Activated naive CD4-positive, alpha-beta T cell treated with anti-CD3 and anti-CD28 coated beads for 36 hours (primary cell): ENCODE measurements at regions of chr1 and their contacts with region 1.

Region 1: DNA sequence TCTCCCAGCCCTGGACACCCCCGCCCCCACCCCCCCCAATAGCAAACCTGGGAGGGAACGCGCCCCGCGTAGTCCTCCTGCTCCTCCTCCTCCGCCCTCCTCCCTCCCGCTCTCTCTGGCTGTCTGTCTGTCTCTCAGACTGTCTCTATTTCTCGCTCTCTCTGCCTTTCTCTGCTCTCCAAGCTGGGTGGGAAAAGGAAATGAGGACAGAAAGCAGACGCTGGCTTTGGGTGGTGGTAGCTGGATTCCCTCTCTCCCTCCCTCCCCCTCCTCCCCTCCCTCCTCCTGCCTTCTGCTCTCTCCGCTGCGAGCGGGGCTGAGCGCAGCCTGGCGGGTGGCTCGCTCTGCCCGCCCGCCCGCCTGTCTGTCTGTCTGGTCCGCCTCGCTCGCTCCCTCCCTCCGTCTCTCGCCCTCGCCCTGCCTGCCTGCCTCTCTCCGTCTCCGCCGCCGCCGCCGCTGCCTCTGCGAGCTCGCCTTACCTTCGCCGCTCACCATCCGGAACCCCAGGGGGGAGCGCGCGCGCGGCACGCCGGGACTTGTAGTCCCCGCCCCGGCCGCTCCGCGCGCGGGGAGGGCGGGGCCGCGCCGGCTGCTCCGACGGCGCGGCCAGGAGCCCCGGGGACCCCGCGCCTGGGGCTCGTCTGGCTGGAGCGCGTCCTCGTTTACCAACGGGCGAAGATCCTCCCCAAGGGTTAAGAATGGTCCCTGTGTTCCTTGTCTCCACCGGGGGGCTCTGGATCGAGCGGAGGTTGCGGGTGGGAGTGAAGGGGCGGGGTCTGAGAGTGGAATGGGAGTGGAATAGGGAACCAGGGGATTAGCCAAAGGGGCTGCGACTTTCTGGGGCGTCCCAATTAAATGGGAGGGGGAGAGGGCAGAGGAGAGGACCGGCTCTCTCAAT is at the start of gene AHDC1:
- DNase-seq: peak; percentile 91
- H3K4me3 Mint-ChIP-seq: peak within 1 kb of the TSS; percentile 85
- H3K27ac Mint-ChIP-seq: peak within 1 kb of the TSS; percentile 57
- H3K4me1 Mint-ChIP-seq: peaks cover 39% of the 10 kb centered on the region
- H3K27me3 Mint-ChIP-seq: no peaks in the 10 kb centered on the region
- total RNA-seq, gene AHDC1: 7.7 to 10.1 TPM

Region 2: DNA sequence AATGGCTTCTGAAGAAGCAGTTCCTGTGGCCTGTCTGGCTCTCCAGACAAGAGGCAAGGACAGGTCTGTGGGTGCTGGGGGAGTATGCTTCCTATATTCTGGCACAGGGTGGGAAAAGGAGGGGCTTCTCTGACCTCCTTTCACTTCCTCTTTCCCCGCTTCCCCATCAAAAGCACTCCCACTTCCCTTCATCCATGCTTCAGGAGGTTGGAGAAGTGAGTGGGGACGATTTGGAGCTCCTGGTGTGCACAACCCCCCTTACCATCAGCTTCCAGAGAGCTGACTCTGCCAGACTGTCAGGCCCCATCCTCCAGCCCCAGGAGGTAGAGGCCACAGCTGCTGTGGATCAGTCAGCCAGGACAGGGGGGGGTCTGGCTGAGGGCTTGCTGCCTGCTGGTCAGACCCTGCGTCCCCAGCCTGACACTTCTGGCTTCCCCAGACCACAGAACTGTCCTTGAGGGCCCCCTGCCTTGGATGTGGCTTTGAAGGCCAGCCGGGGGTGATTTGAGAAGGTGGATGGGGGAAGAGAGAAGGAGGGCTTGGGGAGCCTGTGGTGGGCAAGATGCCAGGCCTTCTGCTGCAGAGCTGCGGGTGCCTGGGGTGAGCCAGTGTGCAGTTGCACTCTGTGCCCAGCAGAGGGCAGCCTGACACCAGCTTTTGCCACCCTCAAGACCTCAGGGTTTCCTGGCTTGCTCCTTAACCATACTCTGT is 303.4 kb before region 1 on chr1:
- CTCF ChIA-PET with region 1: interaction called, 51 read pairs
- intact Hi-C with region 1: loop called (anchors 1 kb)
- DNase-seq: peak; percentile 84
- H3K4me3 Mint-ChIP-seq: no peak overlapping the region
- H3K27ac Mint-ChIP-seq: no peak overlapping the region
- H3K4me1 Mint-ChIP-seq: no peaks in the 10 kb centered on the region
- H3K27me3 Mint-ChIP-seq: no peaks in the 10 kb centered on the region

Region 3: DNA sequence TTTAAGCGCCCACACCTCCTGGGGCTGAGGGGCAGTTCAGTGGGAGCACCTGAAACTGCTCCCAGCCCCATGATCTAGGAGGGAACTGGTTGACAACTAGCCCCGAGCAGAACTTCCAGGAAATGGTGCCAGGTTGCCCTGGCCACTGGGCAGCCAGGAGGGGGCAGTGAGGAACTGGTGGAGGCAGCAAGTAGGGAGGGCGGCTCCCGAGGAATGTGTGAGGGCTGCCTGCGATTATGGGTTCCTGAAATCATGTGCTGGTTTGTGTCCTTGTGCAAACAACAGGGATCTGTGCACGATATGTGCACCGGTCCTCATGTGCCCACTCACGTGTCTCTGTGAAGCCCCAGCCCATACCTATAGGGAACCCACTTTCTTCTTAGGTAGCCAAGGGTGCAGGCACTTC is 201.6 kb before region 1 on chr1:
- CTCF ChIA-PET with region 1: interaction called, 30 read pairs
- intact Hi-C with region 1: loop called (anchors 1 kb)
- DNase-seq: peak; percentile 53
- H3K4me3 Mint-ChIP-seq: no peak overlapping the region
- H3K27ac Mint-ChIP-seq: peak overlapping the region; percentile 74
- H3K4me1 Mint-ChIP-seq: peaks cover 19% of the 10 kb centered on the region
- H3K27me3 Mint-ChIP-seq: no peaks in the 10 kb centered on the region

Region 4: GRCh38 chr1:27525296-27526272 is 78.3 kb before region 1 on chr1:
- CTCF ChIA-PET with region 1: interaction called, 42 read pairs
- intact Hi-C with region 1: loop called (anchors 1 kb)
- DNase-seq: peak; percentile 83
- H3K4me3 Mint-ChIP-seq: peak overlapping the region; percentile 69
- H3K27ac Mint-ChIP-seq: peak overlapping the region; percentile 72
- H3K4me1 Mint-ChIP-seq: peaks cover 56% of the 10 kb centered on the region
- H3K27me3 Mint-ChIP-seq: no peaks in the 10 kb centered on the region

Region 5: DNA sequence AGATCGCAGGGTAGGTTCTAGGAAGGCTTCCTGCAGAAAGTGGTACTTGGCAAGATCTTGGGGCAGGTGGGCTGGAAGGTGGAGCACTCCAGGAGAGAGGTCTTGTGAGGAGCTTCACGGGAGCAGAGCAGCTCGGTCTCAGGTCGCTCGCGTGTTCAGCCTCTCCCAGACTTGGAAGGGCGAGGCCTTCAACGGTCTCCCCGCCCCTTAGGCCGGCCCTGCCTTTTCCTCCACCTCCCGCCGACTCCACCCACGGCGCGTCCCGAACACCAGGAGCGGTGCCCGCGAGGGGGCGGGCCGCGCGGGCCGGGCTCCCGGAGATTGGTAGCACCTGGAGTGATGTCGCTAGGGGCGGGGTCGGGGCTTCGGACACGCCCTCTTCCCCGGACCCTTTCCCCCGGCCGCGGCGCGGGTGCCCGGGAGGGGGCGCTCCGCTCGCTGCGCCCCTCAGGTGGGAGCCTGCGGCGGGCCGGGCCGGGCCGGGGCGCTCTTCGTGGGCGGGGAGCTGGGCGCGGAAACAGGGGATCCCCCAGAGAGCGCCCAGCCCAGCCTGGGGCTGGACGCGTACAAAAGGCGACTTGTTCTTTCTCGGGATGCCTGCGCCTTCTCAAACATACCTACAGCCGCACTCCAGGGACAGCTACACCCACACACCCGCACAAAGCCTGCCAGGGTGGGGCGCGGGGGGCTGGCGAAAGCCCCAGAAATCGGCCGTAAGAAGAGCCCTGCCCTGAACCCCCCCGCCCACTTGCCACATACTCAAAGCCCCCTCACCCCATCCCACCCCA is 35.4 kb before region 1 on chr1:
- CTCF ChIA-PET with region 1: interaction called, 22 read pairs
- intact Hi-C with region 1: loop called (anchors 1 kb)
- DNase-seq: peak; percentile 96
- H3K4me3 Mint-ChIP-seq: peak overlapping the region; percentile 63
- H3K27ac Mint-ChIP-seq: no peak overlapping the region
- H3K4me1 Mint-ChIP-seq: peaks cover 13% of the 10 kb centered on the region
- H3K27me3 Mint-ChIP-seq: no peaks in the 10 kb centered on the region

Region 6: GRCh38 chr1:27671964-27672749 is 68.2 kb after region 1 on chr1 and contains the start of gene IFI6:
- CTCF ChIA-PET with region 1: interaction called, 263 read pairs
- intact Hi-C with region 1: no loop called
- DNase-seq: peak; percentile 89
- H3K4me3 Mint-ChIP-seq: peak within 1 kb of the TSS; percentile 95
- H3K27ac Mint-ChIP-seq: peak within 1 kb of the TSS; percentile 91
- H3K4me1 Mint-ChIP-seq: peaks cover 30% of the 10 kb centered on the region
- H3K27me3 Mint-ChIP-seq: no peaks in the 10 kb centered on the region
- total RNA-seq, gene IFI6: 115 to 125 TPM

Region 7: DNA sequence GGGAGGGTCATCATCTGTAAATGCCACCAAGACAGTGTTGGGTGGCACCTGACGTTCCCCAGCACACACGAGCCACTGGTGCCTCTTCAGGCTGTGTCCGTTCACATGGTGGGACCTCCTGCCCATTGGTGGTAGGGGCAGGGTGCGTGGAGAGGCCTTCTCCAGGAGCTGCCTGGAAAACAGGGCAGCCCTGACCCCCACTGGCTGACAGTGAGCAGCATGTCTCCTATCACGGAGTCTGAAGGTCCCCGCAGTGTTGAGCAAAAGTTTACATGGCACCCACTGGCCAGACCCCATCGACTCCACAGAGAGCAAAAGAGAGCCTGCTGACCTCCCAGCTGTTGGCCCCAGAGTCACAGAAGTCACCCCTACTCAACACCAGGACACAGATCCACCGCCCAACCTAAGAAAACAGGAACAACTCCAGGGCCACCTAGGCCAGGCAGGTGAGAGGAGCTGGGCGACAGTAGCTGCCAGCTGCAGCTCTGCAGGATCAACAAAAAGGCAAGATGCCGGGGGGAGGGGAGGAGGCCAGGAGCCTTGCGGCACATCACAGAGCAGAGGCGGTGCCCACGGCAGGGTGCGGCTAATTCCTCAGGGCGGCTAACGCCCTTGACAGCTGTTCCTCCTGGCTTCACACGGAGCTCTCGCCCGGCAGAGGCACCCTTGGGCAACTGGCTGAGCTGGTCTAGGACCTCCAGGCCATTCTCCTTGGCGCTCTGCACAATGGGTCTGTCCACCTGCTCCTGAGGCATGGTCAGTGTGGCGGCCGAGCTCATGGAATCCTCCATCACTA is 82.5 kb after region 1 on chr1:
- CTCF ChIA-PET with region 1: no interaction called
- intact Hi-C with region 1: no loop called
- DNase-seq: no peak
- H3K4me3 Mint-ChIP-seq: no peak overlapping the region
- H3K27ac Mint-ChIP-seq: no peak overlapping the region
- H3K4me1 Mint-ChIP-seq: peaks cover 9% of the 10 kb centered on the region
- H3K27me3 Mint-ChIP-seq: peaks cover 2% of the 10 kb centered on the region

Region 8: GRCh38 chr1:27704958-27705357 is 101.0 kb after region 1 on chr1:
- CTCF ChIA-PET with region 1: no interaction called
- intact Hi-C with region 1: no loop called
- DNase-seq: no peak
- H3K4me3 Mint-ChIP-seq: no peak overlapping the region
- H3K27ac Mint-ChIP-seq: no peak overlapping the region
- H3K4me1 Mint-ChIP-seq: no peaks in the 10 kb centered on the region
- H3K27me3 Mint-ChIP-seq: no peaks in the 10 kb centered on the region